HEK293 (cell line): ENCODE measurements at regions of chr2 and their contacts with region 1.

Region 1: DNA sequence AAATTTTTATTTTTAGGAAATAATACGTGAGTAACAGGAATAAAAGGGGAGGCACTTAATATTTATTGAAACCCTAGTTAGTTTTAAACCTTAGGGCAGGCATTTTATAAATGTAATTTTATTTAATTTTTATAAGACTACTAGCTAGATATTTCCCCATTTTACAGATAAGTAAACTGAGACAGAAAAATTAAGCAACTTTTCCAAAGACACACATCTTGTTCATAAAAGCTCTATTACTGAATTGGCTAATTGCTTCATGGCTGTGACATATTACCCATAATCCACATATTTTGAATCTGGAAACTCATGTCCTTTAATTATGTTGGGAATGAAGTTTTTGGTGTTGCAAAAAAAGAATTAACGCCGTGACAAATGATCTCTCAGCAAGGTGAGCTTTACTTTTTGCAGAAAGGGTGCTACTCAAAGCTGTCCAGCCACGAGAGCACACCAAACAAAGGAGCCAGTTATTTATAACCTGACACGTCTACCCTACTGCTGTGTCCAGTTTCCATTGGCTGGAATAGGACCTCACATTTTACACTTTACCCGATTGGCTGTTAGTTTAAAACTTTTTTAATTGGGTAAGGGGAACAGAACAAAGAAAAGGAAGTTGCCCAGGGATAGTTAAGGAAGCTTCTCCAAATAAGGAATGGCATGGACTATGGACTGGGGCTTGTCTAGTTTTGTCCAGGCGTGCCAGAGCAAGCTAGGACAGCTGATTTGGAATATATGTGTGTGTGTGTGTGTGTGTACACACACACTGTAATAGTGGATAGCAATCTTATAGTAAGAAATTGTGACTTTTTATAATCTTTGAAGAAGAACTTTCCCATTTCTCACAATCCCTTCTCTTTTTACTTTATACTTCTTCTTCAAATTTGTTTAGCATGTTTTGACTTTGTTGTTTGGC is 54.2 kb downstream of the COMMD1 start:
- H3K4me3 ChIP-seq: no peak overlapping the region
- H3K27ac ChIP-seq: no peak overlapping the region
- H3K4me1 ChIP-seq: no peaks in the 10 kb centered on the region
- CTCF ChIP-seq: no peak

Region 2: DNA sequence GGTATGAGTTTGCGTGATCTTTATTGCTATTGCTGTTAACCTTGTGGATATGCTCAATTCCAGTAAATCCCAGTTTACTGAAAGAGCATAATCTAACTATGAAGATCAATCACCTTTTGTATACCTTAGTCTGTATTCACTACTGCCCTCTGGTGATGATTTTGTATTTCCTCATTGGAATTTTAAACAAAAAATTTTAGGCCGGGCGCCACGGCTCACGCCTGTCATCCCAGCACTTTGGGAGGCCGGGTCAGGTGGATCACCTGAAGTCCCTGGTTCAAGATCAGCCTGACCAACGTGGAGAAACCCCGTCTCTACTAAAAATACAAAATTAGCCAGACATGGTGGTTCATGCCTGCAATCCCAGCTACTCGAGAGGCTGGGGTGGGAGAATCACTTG is 49.0 kb before region 1 on chr2:
- CTCF ChIA-PET with region 1: no interaction called
- POLR2A ChIA-PET with region 1: interaction called, 10 read pairs
- H3K4me3 ChIP-seq: no peak overlapping the region
- H3K27ac ChIP-seq: no peak overlapping the region
- H3K4me1 ChIP-seq: peaks cover 3% of the 10 kb centered on the region; the same call in 1 of the 2 replicates
- CTCF ChIP-seq: no peak